Transverse colon (tissue), 4 donors: ENCODE measurements at regions of chr2 and their contacts with region 1.

Region 1: DNA sequence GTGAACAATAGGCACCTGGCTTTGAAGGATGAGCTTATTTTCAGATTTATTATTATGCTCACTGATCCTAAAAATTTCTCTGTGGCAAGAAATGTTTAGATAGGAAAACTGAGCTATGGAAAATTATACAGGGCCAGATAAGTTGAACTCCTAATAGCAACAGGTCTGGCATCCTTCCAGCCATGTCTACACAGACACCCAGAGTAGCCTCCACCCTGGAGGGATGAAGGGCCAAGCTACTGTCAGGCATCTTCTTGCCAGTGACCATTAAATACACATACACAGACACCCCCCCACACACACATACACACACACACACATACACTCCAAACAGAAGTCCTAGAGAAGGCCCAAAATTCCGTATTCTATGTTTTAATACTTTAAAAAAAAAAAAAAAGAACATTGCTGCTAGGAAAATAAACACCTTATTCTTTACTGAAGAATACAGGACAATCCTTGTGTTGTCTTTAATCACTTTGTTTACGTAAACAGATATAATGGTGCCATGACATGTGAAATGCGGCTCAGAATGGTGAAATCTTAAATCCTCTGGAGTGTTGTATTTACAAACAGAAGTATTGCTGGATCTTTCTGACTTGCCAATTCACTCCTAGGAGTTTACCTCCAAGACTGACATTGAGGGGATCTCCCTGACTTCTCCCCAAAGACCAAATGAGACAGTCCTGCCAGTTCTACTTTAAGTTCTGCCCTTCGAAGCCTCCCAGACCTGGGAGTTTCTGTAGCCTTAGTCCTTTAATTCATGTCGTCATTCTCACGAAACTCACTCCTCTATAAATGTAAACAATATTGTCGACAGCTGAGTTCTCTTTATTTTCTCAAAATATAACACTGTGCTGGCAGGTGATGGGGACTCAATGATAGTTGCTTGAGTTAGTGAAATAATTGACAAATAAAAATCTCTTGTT is 163.1 kb downstream of the ANTXR1 start:
- DNase-seq: no peak
- H3K4me3 ChIP-seq: no peak overlapping the region
- H3K27ac ChIP-seq: peak overlapping the region; percentile 81 to 87 (median 84)
- H3K4me1 ChIP-seq: peaks cover 8 to 66% (median 12%) of the 10 kb centered on the region in 4 donors
- H3K27me3 ChIP-seq: no peaks in the 10 kb centered on the region
- CTCF ChIP-seq: no peak
- EP300 ChIP-seq: no peak
- POLR2A ChIP-seq: no peak

Region 2: GRCh38 chr2:69141061-69141460 is 35.0 kb before region 1 on chr2:
- in situ Hi-C with region 1: no loop called
- intact Hi-C with region 1: loop called (anchors 1 kb)
- DNase-seq: no peak
- H3K4me3 ChIP-seq: no peak overlapping the region
- H3K27ac ChIP-seq: no peak overlapping the region
- H3K4me1 ChIP-seq: peaks cover 8 to 23% (median 18%) of the 10 kb centered on the region in 4 donors
- H3K27me3 ChIP-seq: no peaks in the 10 kb centered on the region
- CTCF ChIP-seq: no peak
- EP300 ChIP-seq: no peak
- POLR2A ChIP-seq: no peak